Activated naive CD4-positive, alpha-beta T cell treated with anti-CD3 and anti-CD28 coated beads for 36 hours (primary cell): ENCODE measurements at regions of chr6 and their contacts with region 1.

Region 1: DNA sequence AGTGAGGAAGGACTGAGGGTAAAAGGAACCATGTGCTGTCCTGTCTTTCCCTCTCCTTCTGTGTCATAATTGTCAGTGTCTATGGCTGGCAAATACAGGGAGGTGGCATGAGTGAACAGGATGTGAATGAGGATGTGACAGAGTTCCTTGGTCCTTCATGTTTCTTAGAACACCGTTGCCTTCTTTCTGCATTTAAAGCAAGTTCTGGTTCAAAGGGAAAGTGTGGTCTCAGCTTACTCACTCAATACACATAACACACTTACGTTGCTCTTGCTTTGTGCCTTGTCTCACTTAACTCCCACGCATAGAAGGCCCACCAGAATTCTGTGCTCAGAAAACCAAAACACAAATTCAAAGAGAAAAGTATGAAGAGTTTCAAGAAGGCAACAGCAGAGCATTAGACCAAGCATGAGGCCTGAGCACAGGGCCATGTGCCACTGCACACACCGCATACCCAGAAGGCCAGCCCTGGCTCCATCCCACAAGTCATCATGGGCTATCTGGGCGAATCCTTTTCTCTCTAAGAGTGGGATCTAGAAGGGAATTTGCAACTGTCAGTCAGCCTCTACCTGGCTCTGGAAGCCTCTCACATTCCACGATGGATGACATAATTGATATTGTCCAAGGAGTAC is 38.9 kb upstream of the SAYSD1 start:
- DNase-seq: peak; percentile 59
- H3K4me3 Mint-ChIP-seq: no peak overlapping the region
- H3K27ac Mint-ChIP-seq: peak overlapping the region; percentile 44
- H3K4me1 Mint-ChIP-seq: peaks cover 29% of the 10 kb centered on the region
- H3K27me3 Mint-ChIP-seq: peaks cover 3% of the 10 kb centered on the region

Region 2: GRCh38 chr6:38973178-38974054 is 180.5 kb before region 1 on chr6:
- CTCF ChIA-PET with region 1: interaction called, 3 read pairs
- intact Hi-C with region 1: loop called (anchors 2 kb)
- DNase-seq: peak; percentile 60
- H3K4me3 Mint-ChIP-seq: no peak overlapping the region
- H3K27ac Mint-ChIP-seq: no peak overlapping the region
- H3K4me1 Mint-ChIP-seq: no peaks in the 10 kb centered on the region
- H3K27me3 Mint-ChIP-seq: no peaks in the 10 kb centered on the region

Region 3: DNA sequence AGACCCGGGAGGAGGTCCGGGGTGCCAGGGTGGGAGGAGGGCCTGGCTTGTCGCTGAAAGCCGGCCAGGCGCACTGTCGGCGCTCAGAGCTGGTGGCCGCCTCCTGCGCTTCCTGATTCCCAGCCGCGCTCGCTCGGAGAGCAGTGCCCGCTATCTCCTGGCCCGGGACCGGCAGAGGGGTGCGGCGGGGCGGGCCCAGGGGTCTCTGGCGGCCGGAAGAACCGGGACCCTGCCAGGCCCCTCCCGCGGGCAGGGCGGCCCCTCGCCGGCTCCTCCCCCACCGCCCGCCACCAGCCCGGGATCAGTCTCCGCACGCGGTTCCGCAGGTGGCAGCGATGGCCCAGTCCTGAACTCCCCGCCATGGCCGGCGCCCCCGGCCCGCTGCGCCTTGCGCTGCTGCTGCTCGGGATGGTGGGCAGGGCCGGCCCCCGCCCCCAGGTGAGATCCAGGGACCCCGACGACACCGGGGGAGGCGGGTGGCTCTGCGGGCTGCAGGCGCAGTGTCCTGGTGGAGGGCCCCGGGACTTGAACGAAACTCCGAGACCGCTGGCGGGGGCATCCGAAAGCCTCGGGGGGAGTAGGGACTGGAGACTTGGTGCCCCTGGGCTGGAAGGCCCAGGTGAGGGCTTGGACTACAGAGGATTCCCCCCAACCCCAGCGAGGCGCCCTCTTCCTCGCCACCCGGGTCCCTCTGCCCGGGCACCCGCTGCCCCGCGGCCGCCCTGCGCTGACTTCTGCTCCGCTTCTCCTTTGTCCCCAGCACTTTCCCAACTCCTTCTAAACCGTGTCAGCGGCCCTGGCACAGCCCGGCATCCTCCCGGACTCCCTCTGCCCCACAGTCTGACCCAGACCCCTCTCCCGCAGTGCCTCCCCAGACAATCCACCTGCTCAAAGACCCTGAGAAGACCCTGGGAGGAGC is 105.1 kb before region 1 on chr6 and contains the start of gene GLP1R:
- CTCF ChIA-PET with region 1: no interaction called
- intact Hi-C with region 1: loop called (anchors 10 kb)
- DNase-seq: no peak
- H3K4me3 Mint-ChIP-seq: peak within 1 kb of the TSS; percentile 43
- H3K27ac Mint-ChIP-seq: no peak within 1 kb of the TSS
- H3K4me1 Mint-ChIP-seq: peaks cover 23% of the 10 kb centered on the region
- H3K27me3 Mint-ChIP-seq: peaks cover 27% of the 10 kb centered on the region
- total RNA-seq, gene GLP1R: 0.07 to 0.12 TPM